Activated naive CD8-positive, alpha-beta T cell treated with anti-CD3 and anti-CD28 coated beads, Interleukin-2, amount 10 ng/mL, durations not matched to agents 7 days and 5 days (primary cell): ENCODE measurements at regions of chr15 and their contacts with region 1.

Region 1: DNA sequence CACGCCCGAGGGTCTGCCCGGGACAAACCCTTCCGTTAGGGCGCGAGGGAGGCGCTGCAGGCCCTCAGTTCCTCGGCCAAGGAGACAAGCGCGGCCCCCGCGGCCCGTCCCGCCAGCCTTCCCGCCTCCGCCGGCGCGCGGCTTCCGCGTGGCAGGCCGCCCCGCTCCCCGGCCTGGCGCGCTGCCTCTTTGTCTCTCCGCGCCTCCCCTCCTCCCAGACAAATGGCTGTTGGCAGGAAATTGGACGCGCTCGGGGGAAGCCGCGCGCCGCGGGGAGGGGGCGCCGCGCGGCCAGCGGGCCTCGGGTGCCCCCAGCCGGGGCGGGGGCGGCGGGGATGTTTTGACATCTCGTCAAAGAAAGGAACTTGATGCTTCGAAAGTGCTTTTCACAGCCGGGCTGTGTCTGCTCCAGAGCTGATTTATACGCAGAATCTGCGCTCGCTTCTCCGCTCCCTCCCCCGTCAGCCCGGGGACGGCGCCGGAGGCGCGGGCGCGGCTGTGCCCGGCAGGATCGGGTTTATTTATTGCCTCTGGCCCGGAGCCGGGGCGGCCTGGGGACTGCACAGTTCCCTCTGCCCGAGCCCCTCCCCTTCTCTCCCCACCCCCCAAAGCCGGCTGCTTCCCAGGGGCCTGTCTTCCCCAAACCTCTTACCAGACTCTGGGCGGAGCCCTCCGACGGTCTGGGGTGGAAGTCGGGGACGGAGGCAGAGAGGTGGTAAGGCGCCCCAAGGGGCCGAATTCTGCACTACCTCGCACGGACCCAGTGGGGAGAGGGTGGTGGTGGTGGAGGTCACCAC is 20.7 kb downstream of the SHF start:
- DNase-seq: peak; percentile 81
- ATAC-seq: peak; percentile 93
- H3K4me3 Mint-ChIP-seq: peak overlapping the region; percentile 69
- H3K27ac Mint-ChIP-seq: peak overlapping the region; percentile 79
- H3K4me1 Mint-ChIP-seq: peaks cover 11% of the 10 kb centered on the region
- H3K27me3 Mint-ChIP-seq: no peaks in the 10 kb centered on the region

Region 2: GRCh38 chr15:45198337-45199135 is 31.5 kb after region 1 on chr15:
- POLR2A ChIA-PET with region 1: interaction called, 40 read pairs
- DNase-seq: peak; percentile 89
- ATAC-seq: peak; percentile 77
- H3K4me3 Mint-ChIP-seq: no peak overlapping the region
- H3K27ac Mint-ChIP-seq: no peak overlapping the region
- H3K4me1 Mint-ChIP-seq: peaks cover 14% of the 10 kb centered on the region
- H3K27me3 Mint-ChIP-seq: peaks cover 6% of the 10 kb centered on the region

Region 3: DNA sequence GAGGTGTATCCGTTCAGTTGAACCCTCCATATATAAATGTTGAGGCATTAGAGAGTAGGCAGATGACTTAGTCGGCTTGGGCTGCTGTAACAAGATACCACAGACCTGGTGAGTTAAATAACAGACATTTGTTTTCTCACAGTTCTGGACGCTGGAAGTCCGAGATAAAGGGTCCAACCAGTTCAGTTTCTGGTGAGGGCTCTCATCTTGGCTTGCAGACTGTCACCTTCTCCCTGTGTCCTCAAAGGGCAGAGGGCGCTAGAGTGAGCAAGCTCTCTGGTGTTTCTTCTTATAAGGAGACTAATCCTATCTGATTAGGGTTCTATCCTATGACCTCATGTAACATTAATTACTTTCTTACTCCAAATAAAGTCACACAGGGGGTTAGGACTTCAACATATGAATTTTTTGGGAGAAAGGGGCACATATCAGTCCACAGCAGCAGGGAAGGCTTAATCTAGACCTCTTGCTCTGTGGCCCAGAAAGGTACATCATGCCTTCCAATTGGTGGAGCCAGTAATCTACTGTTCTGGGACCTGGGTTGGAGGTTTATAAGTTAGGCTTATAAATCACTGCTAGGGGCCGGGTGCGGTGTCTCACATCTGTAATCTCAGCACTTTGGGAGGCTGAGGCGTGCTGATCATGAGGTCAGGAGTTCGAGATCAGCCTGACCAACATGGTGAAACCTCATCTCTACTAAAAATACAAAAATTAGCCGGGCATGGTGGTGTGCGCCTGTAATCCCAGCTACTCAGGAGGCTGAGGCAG is 58.7 kb after region 1 on chr15:
- POLR2A ChIA-PET with region 1: no interaction called
- DNase-seq: no peak
- ATAC-seq: no peak
- H3K4me3 Mint-ChIP-seq: no peak overlapping the region
- H3K27ac Mint-ChIP-seq: no peak overlapping the region
- H3K4me1 Mint-ChIP-seq: no peaks in the 10 kb centered on the region
- H3K27me3 Mint-ChIP-seq: peaks cover 17% of the 10 kb centered on the region